ENCODE measurements at regions of chr10 and their contacts with region 1.

Region 1: GRCh38 chr10:20858292-20859124 is 38.6 kb downstream of the NEBL start:
- DNase-seq: no peak
- H3K4me3 ChIP-seq: no peak overlapping the region
- H3K27ac ChIP-seq: no peak overlapping the region
- H3K4me1 ChIP-seq: no peaks in the 10 kb centered on the region
- H3K27me3 ChIP-seq: no peaks in the 10 kb centered on the region
- CTCF ChIP-seq: peak; percentile 27 to 41 (median 39)
- EP300 ChIP-seq: no peak
- POLR2A ChIP-seq: no peak

Region 2: GRCh38 chr10:19412531-19412930 is 1446.0 kb before region 1 on chr10:
- intact Hi-C with region 1: loop called (anchors 10 kb)
- DNase-seq: no peak
- H3K4me3 ChIP-seq: no peak overlapping the region
- H3K27ac ChIP-seq: no peak overlapping the region
- H3K4me1 ChIP-seq: no peaks in the 10 kb centered on the region
- H3K27me3 ChIP-seq: no peaks in the 10 kb centered on the region
- CTCF ChIP-seq: peak; percentile 53 to 64 (median 64)
- EP300 ChIP-seq: no peak
- POLR2A ChIP-seq: no peak

Region 3: DNA sequence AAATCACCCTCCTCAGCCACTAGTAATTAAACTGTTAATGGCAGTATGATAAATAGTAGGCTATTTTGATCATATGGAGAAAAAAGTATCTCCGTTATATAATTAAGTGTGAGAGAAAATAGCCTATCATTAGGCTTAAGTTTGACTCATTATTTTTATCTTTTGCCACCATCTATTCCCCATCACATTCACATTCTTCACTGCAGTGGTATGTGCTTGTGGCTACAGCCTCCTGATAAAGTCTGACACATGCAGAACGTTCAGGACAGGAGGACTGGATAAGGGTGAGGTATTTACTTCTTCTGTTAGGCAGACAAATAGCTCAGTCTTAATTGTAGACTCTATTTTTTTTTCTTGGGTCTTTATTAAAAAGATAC is 32.8 kb after region 1 on chr10:
- intact Hi-C with region 1: no loop called
- DNase-seq: no peak
- H3K4me3 ChIP-seq: no peak overlapping the region
- H3K27ac ChIP-seq: no peak overlapping the region
- H3K4me1 ChIP-seq: no peaks in the 10 kb centered on the region
- H3K27me3 ChIP-seq: peaks cover 0 to 8% (median 0%) of the 10 kb centered on the region in 4 donors
- CTCF ChIP-seq: no peak
- EP300 ChIP-seq: no peak
- POLR2A ChIP-seq: no peak

Region 4: DNA sequence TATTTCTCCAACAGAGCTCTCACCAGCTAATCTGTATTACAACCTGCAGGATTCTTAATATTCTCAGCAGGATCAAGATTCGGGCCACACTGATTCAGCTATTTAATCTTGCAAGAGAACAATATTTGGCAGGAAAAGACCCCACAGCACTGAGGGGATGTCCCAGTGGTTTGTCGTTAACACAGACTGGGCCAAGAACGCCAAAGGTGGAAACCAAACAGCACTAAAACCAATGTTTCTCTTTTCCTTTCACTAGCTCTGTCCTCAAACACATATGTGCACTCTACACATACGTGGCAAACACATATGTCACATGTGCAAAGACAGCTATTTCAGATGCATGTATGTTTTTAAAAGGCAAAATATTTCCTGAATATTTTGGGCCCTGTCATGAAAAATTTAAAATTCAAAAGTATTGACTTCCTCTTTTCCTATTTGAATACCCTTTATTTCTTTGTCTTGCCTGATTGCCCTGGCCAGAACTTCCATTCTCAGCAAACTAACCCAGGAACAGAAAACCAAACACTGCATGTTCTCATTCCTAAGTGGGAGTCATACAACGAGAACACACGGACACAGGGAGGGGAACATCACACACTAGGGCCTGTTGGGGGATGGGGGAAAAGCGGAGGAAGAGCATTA is 90.3 kb after region 1 on chr10:
- intact Hi-C with region 1: no loop called
- DNase-seq: peak; percentile 60
- H3K4me3 ChIP-seq: no peak overlapping the region
- H3K27ac ChIP-seq: no peak overlapping the region
- H3K4me1 ChIP-seq: no peaks in the 10 kb centered on the region
- H3K27me3 ChIP-seq: no peaks in the 10 kb centered on the region
- CTCF ChIP-seq: no peak
- EP300 ChIP-seq: no peak
- POLR2A ChIP-seq: no peak

Measured in esophagus muscularis mucosa (tissue), 4 donors.